ENCODE measurements at regions of chr16 and their contacts with region 1.

Region 1: DNA sequence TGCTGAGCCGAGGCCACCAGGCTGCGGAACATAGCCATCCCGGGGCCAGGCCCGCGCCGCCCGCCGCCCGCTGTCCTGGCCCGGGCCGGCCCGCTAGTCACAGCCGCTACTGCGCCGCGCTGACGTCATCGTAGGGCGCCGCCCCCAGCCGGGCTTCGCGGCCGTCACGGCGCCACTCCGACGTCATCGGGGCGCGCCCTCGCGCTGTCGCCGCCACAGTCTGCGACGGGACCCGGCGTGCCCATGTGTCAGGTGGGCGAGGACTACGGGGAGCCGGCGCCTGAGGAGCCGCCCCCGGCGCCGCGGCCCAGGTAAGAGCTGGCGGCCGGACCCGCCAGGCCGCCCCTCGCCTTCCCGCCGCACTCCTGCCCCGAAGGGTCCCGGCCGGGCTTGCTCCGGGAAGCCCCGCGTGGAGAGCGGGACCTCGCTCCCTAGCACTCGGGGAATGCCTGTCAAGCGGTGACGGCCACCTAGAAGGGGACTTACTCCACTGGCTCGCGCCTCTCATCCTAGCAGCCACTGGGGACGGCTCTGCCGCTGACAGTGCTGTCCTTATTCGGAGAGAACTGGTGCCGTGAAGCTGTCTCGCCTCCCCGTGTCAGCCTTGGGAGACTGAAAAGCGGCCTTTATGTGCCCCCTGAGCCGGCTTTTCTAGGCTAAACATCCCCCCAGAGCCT is at the starts of genes CTU2 and RNF166:
- DNase-seq: peak; percentile 79 to 97 (median 91)
- ATAC-seq: peak; percentile 55
- H3K4me3 ChIP-seq: peak within 1 kb of the TSS; percentile 80 to 89
- H3K4me3 Mint-ChIP-seq: peak within 1 kb of the TSS; percentile 90
- H3K27ac ChIP-seq: peak within 1 kb of the TSS; percentile 88 to 91
- H3K27ac Mint-ChIP-seq: peak within 1 kb of the TSS; percentile 98
- H3K4me1 ChIP-seq: peaks cover 30% of the 10 kb centered on the region
- H3K4me1 Mint-ChIP-seq: peaks cover 44% of the 10 kb centered on the region
- H3K27me3 ChIP-seq: no peaks in the 10 kb centered on the region
- H3K27me3 Mint-ChIP-seq: no peaks in the 10 kb centered on the region
- CTCF ChIP-seq: no peak
- total RNA-seq, gene CTU2: 59.5 to 60.4 TPM
- total RNA-seq, gene RNF166: 371 to 406 TPM

Region 2: GRCh38 chr16:87950765-87951549 is 755.5 kb before region 1 on chr16 and contains the start of gene BANP:
- CTCF ChIA-PET with region 1: no interaction called
- POLR2A ChIA-PET with region 1: no interaction called
- intact Hi-C with region 1: loop called in 1 of 2 experiments (anchors 10 kb)
- DNase-seq: peak; percentile 92 to 100 (median 96)
- ATAC-seq: peak; percentile 93
- H3K4me3 ChIP-seq: peak within 1 kb of the TSS; percentile 72 to 98
- H3K4me3 Mint-ChIP-seq: peak within 1 kb of the TSS; percentile 97
- H3K27ac ChIP-seq: peak within 1 kb of the TSS; percentile 88 to 96
- H3K27ac Mint-ChIP-seq: peak within 1 kb of the TSS; percentile 99
- H3K4me1 ChIP-seq: peaks cover 37% of the 10 kb centered on the region
- H3K4me1 Mint-ChIP-seq: peaks cover 42% of the 10 kb centered on the region
- H3K27me3 ChIP-seq: no peaks in the 10 kb centered on the region
- H3K27me3 Mint-ChIP-seq: no peaks in the 10 kb centered on the region
- CTCF ChIP-seq: peak; percentile 41
- total RNA-seq, gene BANP: 55.3 to 60.6 TPM

Region 3: GRCh38 chr16:88803264-88803987 is 97.0 kb after region 1 on chr16 and contains the start of gene CDT1:
- CTCF ChIA-PET with region 1: no interaction called
- POLR2A ChIA-PET with region 1: no interaction called
- intact Hi-C with region 1: loop called (anchors 1 to 2 kb)
- DNase-seq: peak; percentile 70 to 94 (median 85)
- ATAC-seq: peak; percentile 68
- H3K4me3 ChIP-seq: peak within 1 kb of the TSS; percentile 59 to 65
- H3K4me3 Mint-ChIP-seq: peak within 1 kb of the TSS; percentile 84
- H3K27ac ChIP-seq: peak within 1 kb of the TSS; percentile 44 to 59
- H3K27ac Mint-ChIP-seq: peak within 1 kb of the TSS; percentile 72
- H3K4me1 ChIP-seq: peaks cover 26% of the 10 kb centered on the region
- H3K4me1 Mint-ChIP-seq: peaks cover 20% of the 10 kb centered on the region
- H3K27me3 ChIP-seq: no peaks in the 10 kb centered on the region
- H3K27me3 Mint-ChIP-seq: no peaks in the 10 kb centered on the region
- CTCF ChIP-seq: no peak
- total RNA-seq, gene CDT1: 1.2 to 2.3 TPM